ENCODE measurements at regions of chr5 and their contacts with region 1.

Region 1: GRCh38 chr5:14595189-14595588 is 13.6 kb downstream of the OTULINL start:
- DNase-seq: peak; percentile 40
- ATAC-seq: peak; percentile 39
- H3K4me3 ChIP-seq: peak overlapping the region in 2 of 5 experiments; percentile 9 to 12
- H3K4me3 Mint-ChIP-seq: peak overlapping the region; percentile 16
- H3K27ac ChIP-seq: no peak overlapping the region
- H3K27ac Mint-ChIP-seq: no peak overlapping the region
- H3K4me1 ChIP-seq: peaks cover 30 to 34% of the 10 kb centered on the region in 2 donors
- H3K4me1 Mint-ChIP-seq: peaks cover 41% of the 10 kb centered on the region
- H3K27me3 ChIP-seq: no peaks in the 10 kb centered on the region
- H3K27me3 Mint-ChIP-seq: no peaks in the 10 kb centered on the region
- CTCF ChIP-seq: no peak

Region 2: DNA sequence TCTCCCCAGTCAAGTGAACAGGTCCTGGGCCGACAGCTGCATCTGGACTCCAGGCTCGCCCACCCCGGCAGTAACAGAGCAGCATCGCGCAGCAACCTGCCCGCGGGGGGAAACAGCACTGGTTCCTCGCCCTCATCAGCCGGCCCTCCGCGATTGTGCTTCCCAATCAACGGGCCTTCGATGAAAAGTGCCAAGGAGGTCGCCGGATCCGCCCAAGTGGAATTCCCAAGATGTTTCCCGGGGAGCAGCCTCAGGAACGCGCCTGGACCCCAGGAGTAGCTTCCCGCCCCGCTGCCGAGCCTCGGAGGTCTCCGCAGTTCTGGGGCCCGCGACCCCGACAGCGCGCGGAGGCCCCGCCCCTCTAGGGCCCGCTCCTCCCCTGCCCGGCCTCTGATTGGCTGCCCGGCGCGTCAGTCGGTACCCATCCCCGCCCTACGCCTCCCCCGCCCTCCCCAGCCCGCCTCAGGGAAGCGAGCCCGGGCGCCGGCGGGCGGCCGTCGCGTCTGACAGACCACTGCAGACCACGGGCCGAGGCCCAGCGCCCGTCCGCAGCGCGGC is 13.8 kb before region 1 on chr5 and contains the start of gene OTULINL:
- CTCF ChIA-PET with region 1: interaction called, 3 read pairs
- POLR2A ChIA-PET with region 1: interaction called, 11 read pairs
- intact Hi-C with region 1: no loop called
- DNase-seq: peak; percentile 85
- ATAC-seq: peak; percentile 97
- H3K4me3 ChIP-seq: peak within 1 kb of the TSS; percentile 31 to 70 (median 62)
- H3K4me3 Mint-ChIP-seq: peak within 1 kb of the TSS; percentile 74
- H3K27ac ChIP-seq: no peak within 1 kb of the TSS
- H3K27ac Mint-ChIP-seq: no peak within 1 kb of the TSS
- H3K4me1 ChIP-seq: peaks cover 9 to 14% of the 10 kb centered on the region in 2 donors
- H3K4me1 Mint-ChIP-seq: peaks cover 5% of the 10 kb centered on the region
- H3K27me3 ChIP-seq: peaks cover 0 to 44% (median 18%) of the 10 kb centered on the region in 4 experiments
- H3K27me3 Mint-ChIP-seq: peaks cover 39% of the 10 kb centered on the region
- CTCF ChIP-seq: no peak
- total RNA-seq, gene OTULINL: 0.80 and 0.81 TPM in 2 replicates

Region 3: DNA sequence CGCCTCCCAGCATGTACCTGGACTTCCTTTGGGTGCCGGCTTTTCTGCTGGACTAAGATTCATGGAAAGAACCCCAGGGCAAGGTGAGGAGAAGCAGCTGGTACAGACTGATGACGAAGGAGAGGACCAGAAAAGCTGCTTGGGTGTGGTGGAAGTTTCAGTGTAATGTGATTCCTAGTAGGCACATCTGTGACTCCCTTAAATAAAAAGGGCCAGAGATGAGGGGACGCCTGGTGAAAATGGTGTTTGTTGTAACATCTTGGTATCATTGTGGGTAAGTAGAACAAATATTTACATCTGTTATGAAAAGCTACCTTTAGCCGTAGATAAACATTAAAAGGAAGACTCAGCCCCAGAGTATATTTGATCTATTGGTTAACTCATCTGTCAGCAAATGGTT is 20.2 kb after region 1 on chr5:
- CTCF ChIA-PET with region 1: no interaction called
- POLR2A ChIA-PET with region 1: no interaction called
- intact Hi-C with region 1: no loop called
- DNase-seq: no peak
- ATAC-seq: no peak
- H3K4me3 ChIP-seq: no peak overlapping the region
- H3K4me3 Mint-ChIP-seq: no peak overlapping the region
- H3K27ac ChIP-seq: no peak overlapping the region
- H3K27ac Mint-ChIP-seq: no peak overlapping the region
- H3K4me1 ChIP-seq: no peaks in the 10 kb centered on the region
- H3K4me1 Mint-ChIP-seq: no peaks in the 10 kb centered on the region
- H3K27me3 ChIP-seq: no peaks in the 10 kb centered on the region
- H3K27me3 Mint-ChIP-seq: peaks cover 7% of the 10 kb centered on the region
- CTCF ChIP-seq: no peak